Caco-2 (cell line): ENCODE measurements at regions of chr4 and their contacts with region 1.

Region 1: GRCh38 chr4:83284193-83285054 is at the start of gene COQ2:
- DNase-seq: peak; percentile 94 to 95
- H3K4me3 ChIP-seq: peak within 1 kb of the TSS; percentile 70
- H3K4me3 Mint-ChIP-seq: peak within 1 kb of the TSS; percentile 89
- H3K27ac Mint-ChIP-seq: peak within 1 kb of the TSS; percentile 92
- H3K4me1 ChIP-seq: peaks cover 19% of the 10 kb centered on the region; the same call in 1 of the 2 replicates
- H3K4me1 Mint-ChIP-seq: peaks cover 7% of the 10 kb centered on the region
- H3K27me3 ChIP-seq: no peaks in the 10 kb centered on the region
- H3K27me3 Mint-ChIP-seq: no peaks in the 10 kb centered on the region
- CTCF ChIP-seq: peak in 1 of 2 experiments; percentile 9
- total RNA-seq, gene COQ2: 22.0 and 24.2 TPM in 2 replicates

Region 2: GRCh38 chr4:83034630-83035494 is 249.6 kb before region 1 on chr4 and contains the start of gene COPS4:
- CTCF ChIA-PET with region 1: interaction called, 10 read pairs
- POLR2A ChIA-PET with region 1: interaction called, 17 read pairs
- intact Hi-C with region 1: loop called (anchors 1 kb)
- DNase-seq: peak; percentile 97 to 98
- H3K4me3 ChIP-seq: peak within 1 kb of the TSS; percentile 80
- H3K4me3 Mint-ChIP-seq: peak within 1 kb of the TSS; percentile 98
- H3K27ac Mint-ChIP-seq: peak within 1 kb of the TSS; percentile 97
- H3K4me1 ChIP-seq: peaks cover 4% of the 10 kb centered on the region; the same call in 1 of the 2 replicates
- H3K4me1 Mint-ChIP-seq: no peaks in the 10 kb centered on the region
- H3K27me3 ChIP-seq: no peaks in the 10 kb centered on the region; the same call in 1 of the 2 replicates
- H3K27me3 Mint-ChIP-seq: no peaks in the 10 kb centered on the region
- CTCF ChIP-seq: peak; percentile 24 to 43
- total RNA-seq, gene COPS4: 34.5 and 36.3 TPM in 2 replicates

Region 3: DNA sequence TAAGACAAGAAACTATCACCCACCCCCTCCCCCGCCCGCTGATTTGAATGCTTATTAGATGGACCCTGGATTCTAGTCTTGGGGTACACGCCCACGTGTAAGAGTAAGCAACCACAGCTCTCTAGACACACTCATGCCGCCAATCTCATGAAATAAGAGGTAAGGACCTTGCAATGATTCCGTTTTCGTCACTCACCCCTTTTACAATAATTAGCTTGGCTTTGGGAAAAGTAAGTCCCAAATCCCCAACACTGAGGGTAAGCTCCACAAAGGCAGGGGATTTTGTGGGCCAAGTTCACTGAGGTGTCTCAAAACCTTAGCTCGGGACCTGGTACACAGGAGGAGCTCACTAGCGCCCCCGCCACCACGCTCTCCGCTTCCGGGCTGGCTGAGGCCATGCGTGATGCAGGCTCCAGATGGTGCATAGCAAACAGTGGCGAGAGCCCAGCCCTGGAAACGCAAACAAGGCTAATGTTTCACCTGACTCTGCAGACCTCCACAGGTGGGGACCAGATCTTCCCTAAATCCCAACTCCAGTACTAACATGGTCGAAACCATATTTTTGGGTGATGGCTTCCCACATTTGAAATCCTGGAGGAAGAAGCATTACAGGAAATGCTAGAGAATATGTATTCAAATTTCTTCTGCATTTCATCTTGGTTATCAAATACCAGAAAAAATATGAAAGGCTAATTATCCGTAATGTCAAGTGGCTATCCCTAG is 174.0 kb before region 1 on chr4:
- CTCF ChIA-PET with region 1: interaction called, 11 read pairs
- POLR2A ChIA-PET with region 1: interaction called, 18 read pairs
- intact Hi-C with region 1: no loop called
- DNase-seq: peak; percentile 87 to 89
- H3K4me3 ChIP-seq: peak overlapping the region; percentile 51
- H3K4me3 Mint-ChIP-seq: peak overlapping the region; percentile 79
- H3K27ac Mint-ChIP-seq: peak overlapping the region; percentile 64
- H3K4me1 ChIP-seq: peaks cover 22% of the 10 kb centered on the region
- H3K4me1 Mint-ChIP-seq: peaks cover 24% of the 10 kb centered on the region
- H3K27me3 ChIP-seq: no peaks in the 10 kb centered on the region
- H3K27me3 Mint-ChIP-seq: no peaks in the 10 kb centered on the region
- CTCF ChIP-seq: peak; percentile 52 to 60

Region 4: GRCh38 chr4:83455281-83456129 is 171.1 kb after region 1 on chr4 and contains the starts of genes HELQ and MRPS18C:
- CTCF ChIA-PET with region 1: interaction called, 3 read pairs
- POLR2A ChIA-PET with region 1: interaction called, 3 read pairs
- intact Hi-C with region 1: loop called (anchors 1 kb)
- DNase-seq: peak; percentile 93 to 97
- H3K4me3 ChIP-seq: peak within 1 kb of the TSS; percentile 61
- H3K4me3 Mint-ChIP-seq: peak within 1 kb of the TSS; percentile 90
- H3K27ac Mint-ChIP-seq: peak within 1 kb of the TSS; percentile 92
- H3K4me1 ChIP-seq: no peaks in the 10 kb centered on the region
- H3K4me1 Mint-ChIP-seq: no peaks in the 10 kb centered on the region
- H3K27me3 ChIP-seq: no peaks in the 10 kb centered on the region
- H3K27me3 Mint-ChIP-seq: no peaks in the 10 kb centered on the region
- CTCF ChIP-seq: no peak
- total RNA-seq, gene HELQ: 10.6 and 11.6 TPM in 2 replicates
- total RNA-seq, gene MRPS18C: 68.7 and 74.1 TPM in 2 replicates

Region 5: GRCh38 chr4:83658806-83659495 is 374.5 kb after region 1 on chr4:
- CTCF ChIA-PET with region 1: no interaction called
- POLR2A ChIA-PET with region 1: no interaction called
- intact Hi-C with region 1: no loop called
- DNase-seq: no peak
- H3K4me3 ChIP-seq: no peak overlapping the region
- H3K4me3 Mint-ChIP-seq: no peak overlapping the region
- H3K27ac Mint-ChIP-seq: no peak overlapping the region
- H3K4me1 ChIP-seq: no peaks in the 10 kb centered on the region
- H3K4me1 Mint-ChIP-seq: no peaks in the 10 kb centered on the region
- H3K27me3 ChIP-seq: no peaks in the 10 kb centered on the region
- H3K27me3 Mint-ChIP-seq: peaks cover 10% of the 10 kb centered on the region
- CTCF ChIP-seq: no peak